ENCODE measurements at regions of chr22 and their contacts with region 1.

Region 1: DNA sequence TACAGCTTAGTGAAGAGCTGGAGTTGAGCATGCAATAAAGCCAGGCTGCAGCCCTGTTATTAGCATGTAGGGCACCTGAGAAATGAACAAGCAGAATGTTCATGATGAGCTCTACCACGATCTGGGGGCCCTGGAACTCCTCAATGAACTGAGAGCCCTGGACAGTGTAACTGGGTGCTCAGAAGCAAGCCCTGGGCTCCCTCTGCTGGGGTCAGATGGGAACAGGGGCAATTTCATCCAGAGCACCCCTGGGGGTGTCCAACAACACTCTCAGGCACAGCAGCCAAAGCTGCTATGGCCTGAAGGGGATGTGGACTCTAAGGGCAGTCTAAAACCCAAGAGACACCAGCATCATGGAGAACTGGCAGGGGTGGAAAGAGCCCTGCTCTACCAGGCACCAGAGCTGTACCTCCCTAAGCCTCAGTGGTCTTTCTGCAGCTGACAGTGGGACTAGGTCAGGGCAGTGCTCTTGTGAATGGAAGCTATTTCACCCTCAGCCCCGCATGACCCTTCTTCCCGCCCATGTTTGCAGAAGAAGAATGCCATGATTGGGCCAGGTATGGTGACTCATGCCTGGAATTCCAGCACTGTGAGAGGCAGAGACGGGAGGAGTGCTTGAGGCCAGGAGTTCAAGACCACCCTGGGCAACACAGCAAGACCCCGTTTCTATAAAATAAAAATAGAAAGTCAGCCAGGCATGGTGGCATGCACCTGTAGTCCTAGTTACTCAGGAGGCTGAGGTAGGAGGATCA is 28.9 kb downstream of the THOC5 start:
- DNase-seq: peak; percentile 26
- H3K4me3 Mint-ChIP-seq: no peak overlapping the region
- H3K27ac Mint-ChIP-seq: no peak overlapping the region
- H3K4me1 Mint-ChIP-seq: no peaks in the 10 kb centered on the region
- H3K27me3 Mint-ChIP-seq: no peaks in the 10 kb centered on the region
- CTCF ChIP-seq: peak; percentile 26

Region 2: GRCh38 chr22:29394931-29395581 is 129.6 kb before region 1 on chr22:
- CTCF ChIA-PET with region 1: interaction called, 15 read pairs
- POLR2A ChIA-PET with region 1: no interaction called
- intact Hi-C with region 1: loop called (anchors 1 kb)
- DNase-seq: peak; percentile 75
- H3K4me3 Mint-ChIP-seq: no peak overlapping the region
- H3K27ac Mint-ChIP-seq: no peak overlapping the region
- H3K4me1 Mint-ChIP-seq: peaks cover 13% of the 10 kb centered on the region
- H3K27me3 Mint-ChIP-seq: peaks cover 2% of the 10 kb centered on the region
- CTCF ChIP-seq: peak; percentile 71

Region 3: GRCh38 chr22:29512031-29512430 is 12.6 kb before region 1 on chr22:
- CTCF ChIA-PET with region 1: interaction called, 12 read pairs
- POLR2A ChIA-PET with region 1: no interaction called
- intact Hi-C with region 1: no loop called
- DNase-seq: no peak
- H3K4me3 Mint-ChIP-seq: no peak overlapping the region
- H3K27ac Mint-ChIP-seq: no peak overlapping the region
- H3K4me1 Mint-ChIP-seq: no peaks in the 10 kb centered on the region
- H3K27me3 Mint-ChIP-seq: no peaks in the 10 kb centered on the region
- CTCF ChIP-seq: no peak